Gastrocnemius medialis (tissue), 4 donors: ENCODE measurements at regions of chr1 and their contacts with region 1.

Region 1: DNA sequence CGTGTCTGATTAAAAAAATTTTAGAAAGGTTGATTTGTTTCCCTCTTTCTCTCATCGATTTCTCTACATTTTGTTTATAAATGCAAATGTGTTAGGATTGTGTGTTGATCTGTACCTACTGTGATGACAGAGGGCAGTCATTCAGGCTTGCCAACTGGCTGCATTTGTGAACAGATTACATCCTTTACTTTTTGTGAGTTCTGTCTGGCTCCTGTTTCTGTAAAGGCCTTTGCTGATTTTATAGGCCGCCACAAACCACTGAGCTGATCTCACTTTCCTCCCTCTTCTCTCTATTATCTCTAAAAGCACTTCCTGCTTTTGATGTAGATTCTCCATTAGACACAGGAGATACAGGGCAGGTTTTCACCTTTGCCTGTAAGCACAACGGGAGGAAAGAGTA is 106.8 kb downstream of the ESRRG start:
- DNase-seq: no peak
- ATAC-seq: peak in 1 of 2 donors; percentile 20
- H3K4me3 ChIP-seq: no peak overlapping the region
- H3K27ac ChIP-seq: peak overlapping the region; percentile 66 to 84 (median 77)
- H3K4me1 ChIP-seq: peaks cover 19 to 38% of the 10 kb centered on the region in 2 donors
- H3K27me3 ChIP-seq: no peaks in the 10 kb centered on the region
- CTCF ChIP-seq: no peak
- POLR2A ChIP-seq: no peak

Region 2: GRCh38 chr1:216600730-216601609 is 15.5 kb before region 1 on chr1:
- in situ Hi-C with region 1: no loop called
- intact Hi-C with region 1: loop called (anchors 2 kb)
- DNase-seq: peak; percentile 70 to 75
- ATAC-seq: peak; percentile 94 to 96
- H3K4me3 ChIP-seq: peak overlapping the region; percentile 67 to 88 (median 86)
- H3K27ac ChIP-seq: peak overlapping the region; percentile 90 to 98 (median 94)
- H3K4me1 ChIP-seq: peaks cover 9 to 13% of the 10 kb centered on the region in 2 donors
- H3K27me3 ChIP-seq: no peaks in the 10 kb centered on the region
- CTCF ChIP-seq: peak in 4 of 5 experiments; percentile 46 to 70 (median 57)
- POLR2A ChIP-seq: peak; percentile 38 to 74

Region 3: DNA sequence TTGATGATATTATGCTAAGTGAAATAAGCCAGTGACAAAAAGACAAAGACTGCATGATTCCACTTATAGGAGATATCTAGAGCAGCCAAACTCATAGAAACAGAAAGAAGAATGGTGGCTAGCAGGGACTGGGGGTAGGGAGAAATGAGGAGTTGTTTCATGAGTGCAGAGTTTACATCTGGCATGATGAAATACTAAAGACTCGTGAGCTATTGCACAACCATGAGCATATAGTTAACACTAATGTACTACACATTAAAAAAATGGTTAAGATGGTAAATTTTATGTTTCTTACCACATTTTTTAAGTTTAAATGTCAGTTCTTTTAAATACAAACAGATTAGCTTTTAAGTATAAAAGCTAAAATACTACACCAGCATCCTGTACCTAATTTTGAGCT is 49.0 kb after region 1 on chr1:
- in situ Hi-C with region 1: no loop called
- intact Hi-C with region 1: loop called (anchors 10 kb)
- DNase-seq: no peak
- ATAC-seq: no peak
- H3K4me3 ChIP-seq: no peak overlapping the region
- H3K27ac ChIP-seq: peak overlapping the region in 1 of 4 donors; percentile 32
- H3K4me1 ChIP-seq: no peaks in the 10 kb centered on the region
- H3K27me3 ChIP-seq: no peaks in the 10 kb centered on the region
- CTCF ChIP-seq: no peak
- POLR2A ChIP-seq: no peak

Region 4: DNA sequence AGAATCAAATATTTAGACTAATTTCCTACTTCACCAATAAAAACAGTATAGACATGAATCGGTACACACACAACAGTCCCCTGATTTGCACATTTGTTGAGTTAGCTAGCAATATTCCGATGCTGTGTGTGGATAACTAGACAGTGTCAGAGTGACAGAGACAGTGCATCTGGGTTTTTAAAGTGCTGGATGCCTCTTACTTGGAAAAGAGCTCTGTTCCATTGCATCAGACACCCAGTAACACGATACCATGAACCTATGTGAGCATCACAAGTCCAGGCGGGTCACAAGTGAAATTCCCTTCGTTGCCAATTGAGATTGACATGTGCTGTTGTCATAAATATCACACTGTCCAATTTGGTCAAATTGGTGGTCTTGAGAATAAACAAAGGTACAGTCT is 188.8 kb after region 1 on chr1:
- in situ Hi-C with region 1: no loop called
- intact Hi-C with region 1: loop called (anchors 5 kb)
- DNase-seq: peak; percentile 57 to 61
- ATAC-seq: peak; percentile 96
- H3K4me3 ChIP-seq: peak overlapping the region in 1 of 4 donors; percentile 13
- H3K27ac ChIP-seq: peak overlapping the region; percentile 57 to 77 (median 68)
- H3K4me1 ChIP-seq: peaks cover 10 to 37% of the 10 kb centered on the region in 2 donors
- H3K27me3 ChIP-seq: no peaks in the 10 kb centered on the region
- CTCF ChIP-seq: no peak
- POLR2A ChIP-seq: peak in 1 of 2 donors; percentile 53